Posterior vena cava (tissue), 2 donors: ENCODE measurements at regions of chr5 and their contacts with region 1.

Region 1: DNA sequence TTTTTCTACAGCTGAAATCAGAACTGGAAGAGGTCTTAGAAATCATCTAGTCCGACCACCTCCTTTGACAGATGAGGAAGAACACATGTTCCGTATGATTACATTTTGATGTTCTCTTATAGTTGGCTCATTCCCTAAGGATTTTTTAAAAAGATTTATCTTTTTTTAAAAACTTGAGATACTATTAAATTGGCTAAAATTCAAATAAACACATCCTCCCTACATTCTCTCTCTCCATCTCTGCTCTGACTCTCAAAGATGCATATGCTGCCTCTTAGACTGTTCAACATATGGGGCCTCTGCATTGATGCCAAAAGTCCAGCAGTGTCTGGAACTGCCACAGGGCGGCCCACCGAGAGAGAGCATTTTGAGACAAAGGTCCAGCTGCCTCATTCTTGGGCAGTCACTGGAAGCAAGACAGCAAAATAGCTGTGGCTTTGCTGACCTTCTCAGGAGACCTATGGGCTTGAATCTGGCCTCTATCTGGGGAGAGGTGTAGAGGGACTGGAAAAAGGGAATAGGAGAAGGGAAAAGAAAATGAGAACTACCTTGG is 12.8 kb upstream of the TSSK1B start:
- DNase-seq: no peak

Region 2: DNA sequence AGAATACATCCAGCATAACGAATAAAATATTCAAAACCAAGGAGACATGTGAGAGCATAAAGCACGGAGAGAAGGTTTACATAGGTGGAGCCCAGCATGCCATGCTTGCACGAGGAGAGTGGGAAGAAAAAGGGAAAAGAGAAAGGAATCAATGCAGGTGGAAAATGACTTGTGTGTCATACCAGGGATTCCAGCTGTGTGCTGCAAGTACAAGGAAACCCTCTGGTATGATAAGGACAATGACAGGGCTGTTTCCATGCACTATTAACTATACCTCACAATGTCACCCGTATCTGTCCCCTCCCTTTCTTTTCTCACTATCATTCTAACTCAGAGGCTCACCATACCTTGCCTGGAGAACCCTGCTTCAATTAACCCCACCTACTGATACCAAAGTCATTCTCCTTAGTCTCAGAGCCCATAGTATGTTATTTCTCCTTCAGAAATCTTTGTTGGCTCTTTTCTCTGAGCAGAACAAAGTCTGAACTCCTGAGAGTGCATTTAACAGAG is 1454.4 kb before region 1 on chr5:
- intact Hi-C with region 1: no loop called
- DNase-seq: no peak

Region 3: GRCh38 chr5:112604732-112605630 is 842.6 kb before region 1 on chr5:
- intact Hi-C with region 1: loop called in 1 of 2 experiments (anchors 5 kb)
- DNase-seq: no peak

Region 4: GRCh38 chr5:114377946-114378345 is 930.4 kb after region 1 on chr5:
- intact Hi-C with region 1: no loop called
- DNase-seq: no peak